Mammary epithelial cell (primary cell): ENCODE measurements at regions of chr15 and their contacts with region 1.

Region 1: GRCh38 chr15:90648137-90649070 is 68.7 kb upstream of the BLM start:
- DNase-seq: peak; percentile 64
- H3K4me3 ChIP-seq: no peak overlapping the region
- H3K27ac ChIP-seq: no peak overlapping the region
- H3K4me1 ChIP-seq: no peaks in the 10 kb centered on the region
- H3K27me3 ChIP-seq: no peaks in the 10 kb centered on the region
- CTCF ChIP-seq: peak; percentile 89 to 92

Region 2: GRCh38 chr15:90013503-90013937 is 634.9 kb before region 1 on chr15:
- CTCF ChIA-PET with region 1: no interaction called
- dilution Hi-C with region 1: no loop called
- in situ Hi-C with region 1: no loop called
- intact Hi-C with region 1: no loop called
- DNase-seq: no peak
- H3K4me3 ChIP-seq: no peak overlapping the region
- H3K27ac ChIP-seq: no peak overlapping the region
- H3K4me1 ChIP-seq: peaks cover 25% of the 10 kb centered on the region
- H3K27me3 ChIP-seq: no peaks in the 10 kb centered on the region
- CTCF ChIP-seq: no peak

Region 3: GRCh38 chr15:90598031-90598577 is 50.3 kb before region 1 on chr15:
- CTCF ChIA-PET with region 1: no interaction called
- dilution Hi-C with region 1: no loop called
- in situ Hi-C with region 1: no loop called
- intact Hi-C with region 1: no loop called
- DNase-seq: no peak
- H3K4me3 ChIP-seq: no peak overlapping the region
- H3K27ac ChIP-seq: no peak overlapping the region
- H3K4me1 ChIP-seq: no peaks in the 10 kb centered on the region
- H3K27me3 ChIP-seq: no peaks in the 10 kb centered on the region
- CTCF ChIP-seq: no peak

Region 4: GRCh38 chr15:90691982-90692773 is 43.8 kb after region 1 on chr15:
- CTCF ChIA-PET with region 1: no interaction called
- dilution Hi-C with region 1: no loop called
- in situ Hi-C with region 1: loop called in 1 of 2 experiments (anchors 10 kb)
- intact Hi-C with region 1: loop called (anchors 1 kb)
- DNase-seq: no peak
- H3K4me3 ChIP-seq: no peak overlapping the region
- H3K27ac ChIP-seq: no peak overlapping the region
- H3K4me1 ChIP-seq: no peaks in the 10 kb centered on the region
- H3K27me3 ChIP-seq: no peaks in the 10 kb centered on the region
- CTCF ChIP-seq: no peak

Region 5: GRCh38 chr15:90701880-90702630 is 53.7 kb after region 1 on chr15:
- CTCF ChIA-PET with region 1: no interaction called
- dilution Hi-C with region 1: no loop called
- in situ Hi-C with region 1: loop called (anchors 10 kb)
- intact Hi-C with region 1: no loop called
- DNase-seq: no peak
- H3K4me3 ChIP-seq: no peak overlapping the region
- H3K27ac ChIP-seq: no peak overlapping the region
- H3K4me1 ChIP-seq: no peaks in the 10 kb centered on the region
- H3K27me3 ChIP-seq: no peaks in the 10 kb centered on the region
- CTCF ChIP-seq: no peak

Region 6: DNA sequence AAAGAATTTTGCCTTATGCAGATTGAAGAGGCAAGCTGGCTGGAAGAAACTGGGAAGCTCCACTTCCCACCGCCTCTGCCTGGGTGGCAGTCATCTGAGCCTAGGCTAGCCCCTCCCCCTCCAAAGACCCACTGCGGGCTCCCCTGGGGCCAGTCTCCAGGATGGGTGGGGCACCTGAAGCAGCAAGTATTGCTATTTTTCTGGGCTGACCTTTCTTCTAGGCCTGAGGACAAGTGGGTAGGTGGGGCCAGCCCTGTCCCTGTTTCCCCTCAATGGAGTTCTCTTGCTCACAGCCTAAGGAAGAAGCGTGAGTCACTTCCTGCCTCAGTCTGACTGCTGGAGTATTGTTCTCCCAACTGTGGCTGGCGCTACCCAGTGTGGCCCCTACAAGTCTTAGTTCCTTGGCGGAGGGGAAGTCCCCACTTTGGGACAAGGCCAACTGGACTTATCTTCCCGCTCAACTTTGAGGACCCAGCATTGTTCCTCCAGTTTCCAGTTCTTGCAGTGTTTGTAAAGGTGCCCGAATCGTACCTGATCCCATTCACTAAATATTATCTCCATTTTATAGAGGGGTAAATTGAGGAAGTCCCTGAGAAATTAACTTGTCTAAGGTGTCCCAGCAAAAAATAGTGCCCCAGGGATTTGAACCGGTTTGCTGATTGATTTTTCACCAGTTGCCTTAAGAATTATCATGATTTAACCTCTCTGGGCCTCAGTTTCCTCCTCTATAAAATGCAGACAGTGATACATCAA is 221.4 kb after region 1 on chr15:
- CTCF ChIA-PET with region 1: no interaction called
- dilution Hi-C with region 1: no loop called
- in situ Hi-C with region 1: no loop called
- intact Hi-C with region 1: loop called (anchors 5 kb)
- DNase-seq: peak; percentile 83
- H3K4me3 ChIP-seq: no peak overlapping the region
- H3K27ac ChIP-seq: peak overlapping the region; percentile 32
- H3K4me1 ChIP-seq: peaks cover 51% of the 10 kb centered on the region
- H3K27me3 ChIP-seq: no peaks in the 10 kb centered on the region
- CTCF ChIP-seq: no peak

Region 7: DNA sequence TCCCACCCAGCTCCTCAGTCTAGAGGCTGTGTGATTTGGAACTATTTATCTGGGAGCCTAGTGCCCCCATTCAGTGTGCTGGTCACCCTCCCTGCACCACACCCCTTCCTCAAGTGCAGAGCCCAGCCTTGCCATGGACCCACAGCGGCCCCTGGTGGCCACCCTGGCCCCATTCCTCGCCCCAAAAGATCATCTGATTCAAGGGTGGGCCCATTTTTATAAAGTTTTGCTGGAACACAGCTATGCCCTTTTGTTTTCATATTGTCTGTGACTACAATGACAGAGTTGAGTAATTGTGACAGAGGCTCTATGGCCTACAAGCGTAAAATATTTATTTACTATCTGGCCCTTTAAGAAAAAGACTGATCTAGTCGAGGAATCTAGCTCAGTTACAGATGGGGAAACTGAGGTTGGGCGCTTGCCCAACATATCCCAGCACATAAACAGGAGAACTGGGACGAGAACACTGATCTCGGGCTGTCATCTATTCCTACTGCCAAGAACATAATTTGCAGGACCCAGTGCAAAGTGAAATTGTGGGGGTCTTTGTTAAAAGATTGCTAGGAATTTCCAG is 237.7 kb after region 1 on chr15:
- CTCF ChIA-PET with region 1: no interaction called
- dilution Hi-C with region 1: no loop called
- in situ Hi-C with region 1: loop called (anchors 5 kb)
- intact Hi-C with region 1: loop called (anchors 1 kb)
- DNase-seq: no peak
- H3K4me3 ChIP-seq: no peak overlapping the region
- H3K27ac ChIP-seq: no peak overlapping the region
- H3K4me1 ChIP-seq: no peaks in the 10 kb centered on the region
- H3K27me3 ChIP-seq: no peaks in the 10 kb centered on the region
- CTCF ChIP-seq: peak; percentile 93 to 99